Activated CD4-positive, alpha-beta T cell treated with anti-CD3 and anti-CD28 coated beads for 36 hours (primary cell): ENCODE measurements at regions of chr2 and their contacts with region 1.

Region 1: GRCh38 chr2:189633392-189633811 is 27.9 kb upstream of the ASNSD1 start:
- DNase-seq: peak; percentile 17
- ATAC-seq: no peak
- H3K4me3 Mint-ChIP-seq: no peak overlapping the region
- H3K27ac Mint-ChIP-seq: no peak overlapping the region
- H3K4me1 Mint-ChIP-seq: no peaks in the 10 kb centered on the region
- H3K27me3 Mint-ChIP-seq: no peaks in the 10 kb centered on the region

Region 2: GRCh38 chr2:189249171-189249570 is 384.2 kb before region 1 on chr2:
- CTCF ChIA-PET with region 1: no interaction called
- POLR2A ChIA-PET with region 1: no interaction called
- intact Hi-C with region 1: no loop called
- DNase-seq: no peak
- ATAC-seq: no peak
- H3K4me3 Mint-ChIP-seq: no peak overlapping the region
- H3K27ac Mint-ChIP-seq: no peak overlapping the region
- H3K4me1 Mint-ChIP-seq: no peaks in the 10 kb centered on the region
- H3K27me3 Mint-ChIP-seq: no peaks in the 10 kb centered on the region

Region 3: GRCh38 chr2:189512879-189513278 is 120.5 kb before region 1 on chr2:
- CTCF ChIA-PET with region 1: no interaction called
- POLR2A ChIA-PET with region 1: interaction called, 11 read pairs
- intact Hi-C with region 1: no loop called
- DNase-seq: no peak
- ATAC-seq: no peak
- H3K4me3 Mint-ChIP-seq: no peak overlapping the region
- H3K27ac Mint-ChIP-seq: no peak overlapping the region
- H3K4me1 Mint-ChIP-seq: no peaks in the 10 kb centered on the region
- H3K27me3 Mint-ChIP-seq: peaks cover 2% of the 10 kb centered on the region